Psoas muscle (tissue), 8 donors: ENCODE measurements at regions of chr1 and their contacts with region 1.

Region 1: GRCh38 chr1:98932184-98932583 is 72.5 kb downstream of the PLPPR5 start:
- DNase-seq: no peak
- ATAC-seq: no peak
- H3K4me3 ChIP-seq: no peak overlapping the region
- H3K27ac ChIP-seq: no peak overlapping the region
- H3K4me1 ChIP-seq: no peaks in the 10 kb centered on the region
- H3K27me3 ChIP-seq: no peaks in the 10 kb centered on the region
- CTCF ChIP-seq: no peak

Region 2: GRCh38 chr1:98949621-98950020 is 17.4 kb after region 1 on chr1:
- intact Hi-C with region 1: loop called in 1 of 2 experiments (anchors 1 kb)
- DNase-seq: no peak
- ATAC-seq: no peak
- H3K4me3 ChIP-seq: no peak overlapping the region
- H3K27ac ChIP-seq: no peak overlapping the region
- H3K4me1 ChIP-seq: no peaks in the 10 kb centered on the region
- H3K27me3 ChIP-seq: no peaks in the 10 kb centered on the region
- CTCF ChIP-seq: no peak